ENCODE measurements at regions of chr5 and their contacts with region 1.

Region 1: DNA sequence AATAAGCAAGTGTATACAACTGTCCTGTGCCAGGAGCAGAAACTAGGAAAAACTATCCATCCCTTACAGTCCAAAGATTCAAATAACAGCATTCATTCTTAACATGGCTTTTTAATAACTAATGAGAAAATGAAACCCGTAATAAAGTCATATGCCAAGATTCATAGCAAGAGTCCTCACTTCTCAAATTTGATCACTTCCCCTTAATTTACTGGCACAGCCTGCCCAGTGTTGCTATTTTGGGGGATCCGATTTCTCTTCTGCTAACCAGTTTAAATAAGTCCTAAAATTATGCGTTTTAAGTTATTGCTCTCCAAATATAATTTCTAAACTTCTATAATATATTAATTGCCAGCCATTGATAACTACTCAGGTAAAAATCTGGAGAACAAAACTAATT is 177.0 kb upstream of the PTGER4 start:
- DNase-seq: no peak
- ATAC-seq: no peak
- H3K4me3 ChIP-seq: no peak overlapping the region
- H3K27ac ChIP-seq: peak overlapping the region; percentile 75
- H3K4me1 ChIP-seq: peaks cover 23% of the 10 kb centered on the region
- H3K27me3 ChIP-seq: no peaks in the 10 kb centered on the region
- CTCF ChIP-seq: no peak

Region 2: GRCh38 chr5:39815711-39816110 is 687.0 kb before region 1 on chr5:
- CTCF ChIA-PET with region 1: no interaction called
- POLR2A ChIA-PET with region 1: no interaction called
- intact Hi-C with region 1: no loop called
- DNase-seq: no peak
- ATAC-seq: no peak
- H3K4me3 ChIP-seq: no peak overlapping the region
- H3K27ac ChIP-seq: no peak overlapping the region
- H3K4me1 ChIP-seq: no peaks in the 10 kb centered on the region
- H3K27me3 ChIP-seq: no peaks in the 10 kb centered on the region
- CTCF ChIP-seq: no peak

Region 3: DNA sequence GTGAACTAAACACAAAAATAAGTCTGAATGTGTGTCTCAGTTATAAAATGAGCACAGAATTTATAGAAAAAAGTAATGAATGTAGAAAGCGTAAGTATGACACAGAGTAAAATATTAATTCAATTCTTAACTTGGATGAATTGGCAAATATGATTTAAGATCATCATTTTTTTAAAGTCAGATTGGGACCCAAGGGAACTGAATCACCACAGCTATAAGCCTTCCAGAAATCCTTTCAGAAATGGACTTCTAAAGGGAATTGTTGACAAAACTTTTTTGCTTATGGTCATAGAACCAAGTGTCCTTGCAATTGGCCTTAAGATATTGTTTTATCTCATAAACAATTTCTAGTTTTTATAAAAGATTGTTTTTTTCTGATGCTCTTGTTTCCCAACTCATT is 582.9 kb before region 1 on chr5:
- CTCF ChIA-PET with region 1: no interaction called
- POLR2A ChIA-PET with region 1: no interaction called
- intact Hi-C with region 1: no loop called
- DNase-seq: no peak
- ATAC-seq: no peak
- H3K4me3 ChIP-seq: no peak overlapping the region
- H3K27ac ChIP-seq: no peak overlapping the region
- H3K4me1 ChIP-seq: no peaks in the 10 kb centered on the region
- H3K27me3 ChIP-seq: no peaks in the 10 kb centered on the region
- CTCF ChIP-seq: no peak

Region 4: GRCh38 chr5:39948867-39949468 is 553.8 kb before region 1 on chr5:
- CTCF ChIA-PET with region 1: no interaction called
- POLR2A ChIA-PET with region 1: no interaction called
- intact Hi-C with region 1: loop called (anchors 1 kb)
- DNase-seq: peak; percentile 89
- ATAC-seq: peak; percentile 81
- H3K4me3 ChIP-seq: no peak overlapping the region
- H3K27ac ChIP-seq: no peak overlapping the region
- H3K4me1 ChIP-seq: no peaks in the 10 kb centered on the region
- H3K27me3 ChIP-seq: no peaks in the 10 kb centered on the region
- CTCF ChIP-seq: peak; percentile 93

Region 5: DNA sequence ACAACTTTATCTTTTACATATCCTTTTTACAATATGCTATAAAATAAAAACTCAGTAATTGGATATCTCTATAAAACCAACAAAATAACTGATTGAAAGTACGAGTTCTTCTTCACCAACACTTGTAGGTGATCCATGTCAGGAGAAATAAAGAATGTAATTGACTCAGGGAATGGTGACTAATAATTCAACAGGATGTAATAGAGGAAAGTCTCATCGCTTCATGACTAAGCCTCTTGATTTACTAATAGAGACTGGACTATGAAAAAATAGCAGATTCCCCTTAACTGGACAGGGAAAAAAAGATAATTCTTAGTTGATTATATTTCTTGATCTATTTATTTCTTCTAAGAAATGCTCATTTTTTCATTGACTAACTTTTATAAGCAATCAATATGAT is 330.8 kb before region 1 on chr5:
- CTCF ChIA-PET with region 1: no interaction called
- POLR2A ChIA-PET with region 1: no interaction called
- intact Hi-C with region 1: loop called (anchors 1 kb)
- DNase-seq: peak; percentile 94
- ATAC-seq: peak; percentile 84
- H3K4me3 ChIP-seq: no peak overlapping the region
- H3K27ac ChIP-seq: peak overlapping the region; percentile 74
- H3K4me1 ChIP-seq: peaks cover 23% of the 10 kb centered on the region
- H3K27me3 ChIP-seq: no peaks in the 10 kb centered on the region
- CTCF ChIP-seq: no peak

Region 6: GRCh38 chr5:40333459-40334244 is 169.1 kb before region 1 on chr5:
- CTCF ChIA-PET with region 1: no interaction called
- POLR2A ChIA-PET with region 1: no interaction called
- intact Hi-C with region 1: loop called (anchors 5 kb)
- DNase-seq: peak; percentile 85
- ATAC-seq: peak; percentile 91
- H3K4me3 ChIP-seq: peak overlapping the region; percentile 1; the same call in 1 of the 2 replicates
- H3K27ac ChIP-seq: peak overlapping the region; percentile 79
- H3K4me1 ChIP-seq: peaks cover 20% of the 10 kb centered on the region
- H3K27me3 ChIP-seq: no peaks in the 10 kb centered on the region
- CTCF ChIP-seq: no peak

Region 7: DNA sequence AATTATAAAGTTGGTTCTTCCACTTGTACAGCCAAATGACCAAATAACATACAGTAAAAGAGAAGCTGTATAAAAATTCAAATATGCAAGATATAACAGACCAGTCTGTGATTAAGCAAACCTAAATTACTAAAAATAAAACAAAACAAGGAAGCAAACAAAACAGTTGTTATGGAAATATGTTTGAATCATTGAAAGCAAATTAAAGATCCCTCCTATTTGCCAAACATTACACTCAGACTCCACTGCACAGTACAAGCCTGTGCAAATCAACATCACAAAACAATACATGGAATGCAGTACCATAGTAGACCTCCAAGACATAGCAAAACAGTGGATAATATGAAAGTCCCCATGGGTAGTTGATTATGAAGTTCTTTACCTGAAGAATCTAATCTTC is 111.1 kb before region 1 on chr5:
- CTCF ChIA-PET with region 1: no interaction called
- POLR2A ChIA-PET with region 1: no interaction called
- intact Hi-C with region 1: no loop called
- DNase-seq: no peak
- ATAC-seq: peak; percentile 54; the same call in 1 of the 2 replicates
- H3K4me3 ChIP-seq: no peak overlapping the region
- H3K27ac ChIP-seq: no peak overlapping the region
- H3K4me1 ChIP-seq: no peaks in the 10 kb centered on the region; the same call in 1 of the 2 replicates
- H3K27me3 ChIP-seq: no peaks in the 10 kb centered on the region
- CTCF ChIP-seq: no peak

Region 8: GRCh38 chr5:40410231-40410861 is 92.4 kb before region 1 on chr5:
- CTCF ChIA-PET with region 1: no interaction called
- POLR2A ChIA-PET with region 1: no interaction called
- intact Hi-C with region 1: loop called (anchors 1 kb)
- DNase-seq: peak; percentile 71
- ATAC-seq: peak; percentile 6; the same call in 1 of the 2 replicates
- H3K4me3 ChIP-seq: peak overlapping the region; percentile 23
- H3K27ac ChIP-seq: peak overlapping the region; percentile 90
- H3K4me1 ChIP-seq: peaks cover 34% of the 10 kb centered on the region
- H3K27me3 ChIP-seq: no peaks in the 10 kb centered on the region
- CTCF ChIP-seq: no peak

Region 9: DNA sequence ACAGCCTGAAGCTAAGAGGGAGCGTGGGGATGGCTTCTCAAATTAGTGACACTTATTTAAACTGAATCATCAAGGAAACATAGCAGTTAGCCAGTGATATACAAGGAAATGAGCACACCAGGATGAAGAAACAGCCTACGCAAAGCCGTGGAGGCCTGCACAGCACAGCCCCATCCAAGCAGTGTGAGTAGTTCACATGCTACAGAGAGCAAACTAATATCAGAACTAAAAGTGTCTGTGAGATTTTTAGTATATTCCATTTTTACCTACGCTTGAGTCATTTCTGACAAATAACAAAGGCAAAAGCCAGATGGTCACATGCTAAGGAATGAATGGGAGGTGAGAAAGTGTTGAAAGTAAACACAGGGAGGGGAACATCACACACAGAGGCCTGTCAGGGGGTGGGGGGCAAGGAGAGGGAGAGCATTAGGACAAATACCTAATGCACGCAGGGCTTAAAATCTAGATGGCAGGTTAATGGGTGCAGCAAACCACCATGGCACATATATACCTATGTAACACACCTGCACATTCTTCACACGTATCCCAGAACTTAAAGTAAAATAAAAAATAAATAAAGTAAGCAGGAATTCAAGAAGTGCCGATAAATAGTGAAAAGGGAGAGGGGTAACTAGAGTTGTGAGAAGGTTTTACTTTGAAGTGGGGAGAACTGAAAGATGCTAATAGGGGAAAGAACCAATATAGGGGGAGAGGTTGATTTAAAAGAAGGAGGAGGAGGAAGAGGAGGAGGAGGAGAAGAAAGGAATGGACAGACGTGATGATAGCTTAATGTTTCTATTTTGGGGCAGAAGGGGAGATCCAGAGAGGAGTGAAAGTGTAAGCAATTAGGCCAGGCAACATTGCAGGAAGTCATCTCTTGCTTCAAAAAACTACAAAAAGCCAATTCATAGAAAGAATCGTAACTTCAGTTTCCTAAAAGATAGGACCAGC is 76.0 kb after region 1 on chr5:
- CTCF ChIA-PET with region 1: no interaction called
- POLR2A ChIA-PET with region 1: no interaction called
- intact Hi-C with region 1: loop called (anchors 5 kb)
- DNase-seq: peak; percentile 80
- ATAC-seq: peak; percentile 92
- H3K4me3 ChIP-seq: peak overlapping the region; percentile 23; the same call in 1 of the 2 replicates
- H3K27ac ChIP-seq: peak overlapping the region; percentile 88
- H3K4me1 ChIP-seq: peaks cover 30% of the 10 kb centered on the region
- H3K27me3 ChIP-seq: no peaks in the 10 kb centered on the region
- CTCF ChIP-seq: no peak